Esophagus muscularis mucosa (tissue), 4 donors: ENCODE measurements at regions of chr4 and their contacts with region 1.

Region 1: DNA sequence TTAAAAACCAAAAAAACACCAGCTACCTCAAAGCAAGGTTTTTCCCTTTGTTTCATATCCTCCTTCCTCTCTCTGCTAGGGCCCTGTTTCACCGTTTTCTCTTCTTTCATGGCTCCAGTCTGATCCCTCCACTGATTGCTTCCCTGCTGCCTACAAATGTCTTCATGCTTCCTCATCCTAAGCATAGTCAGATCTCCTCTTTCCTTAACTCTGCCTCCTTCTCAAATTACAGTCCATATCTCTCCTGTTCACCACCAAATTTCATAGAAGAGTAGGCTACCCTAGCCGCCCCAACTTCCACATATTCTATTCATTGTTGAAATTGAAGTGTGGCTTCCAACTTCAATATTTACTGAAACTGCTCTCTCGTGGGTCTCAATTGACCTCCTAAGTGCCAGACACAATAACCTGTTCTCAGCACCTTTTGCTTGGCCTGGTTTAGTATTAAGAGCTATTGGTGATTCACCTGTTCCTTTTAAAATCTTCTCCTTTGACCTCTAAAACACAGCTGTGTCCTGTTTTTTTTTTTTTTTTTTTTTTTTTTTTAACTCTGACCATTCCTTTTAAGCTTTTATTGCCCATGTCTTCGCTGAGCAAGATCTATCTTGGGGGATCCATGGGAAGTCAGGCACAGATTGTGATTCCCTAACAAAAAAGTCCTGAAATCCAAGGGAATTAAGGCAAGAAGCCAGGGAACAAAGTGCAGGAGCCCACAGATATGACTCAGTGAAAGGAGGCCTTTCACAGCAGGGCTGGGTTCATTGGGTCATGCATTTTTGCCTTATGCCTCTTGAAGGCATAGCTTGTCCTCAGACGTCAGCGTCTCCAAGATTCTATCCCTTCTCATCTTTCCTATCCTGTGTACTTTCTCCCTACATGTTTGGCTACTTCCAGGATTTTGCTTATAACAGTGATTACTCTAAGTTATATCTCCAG is 85.4 kb downstream of the RPS3A start:
- DNase-seq: no peak
- H3K4me3 ChIP-seq: no peak overlapping the region
- H3K27ac ChIP-seq: no peak overlapping the region
- H3K4me1 ChIP-seq: peaks cover 0 to 7% (median 0%) of the 10 kb centered on the region in 4 donors
- H3K27me3 ChIP-seq: no peaks in the 10 kb centered on the region
- CTCF ChIP-seq: no peak
- EP300 ChIP-seq: no peak
- POLR2A ChIP-seq: no peak

Region 2: GRCh38 chr4:151004222-151004621 is 180.6 kb before region 1 on chr4:
- intact Hi-C with region 1: no loop called
- DNase-seq: no peak
- H3K4me3 ChIP-seq: no peak overlapping the region
- H3K27ac ChIP-seq: no peak overlapping the region
- H3K4me1 ChIP-seq: no peaks in the 10 kb centered on the region
- H3K27me3 ChIP-seq: no peaks in the 10 kb centered on the region
- CTCF ChIP-seq: no peak
- EP300 ChIP-seq: no peak
- POLR2A ChIP-seq: no peak

Region 3: GRCh38 chr4:151158979-151159378 is 25.8 kb before region 1 on chr4:
- intact Hi-C with region 1: loop called (anchors 2 kb)
- DNase-seq: no peak
- H3K4me3 ChIP-seq: no peak overlapping the region
- H3K27ac ChIP-seq: no peak overlapping the region
- H3K4me1 ChIP-seq: peaks cover 0 to 7% (median 6%) of the 10 kb centered on the region in 4 donors
- H3K27me3 ChIP-seq: no peaks in the 10 kb centered on the region
- CTCF ChIP-seq: no peak
- EP300 ChIP-seq: no peak
- POLR2A ChIP-seq: no peak

Region 4: DNA sequence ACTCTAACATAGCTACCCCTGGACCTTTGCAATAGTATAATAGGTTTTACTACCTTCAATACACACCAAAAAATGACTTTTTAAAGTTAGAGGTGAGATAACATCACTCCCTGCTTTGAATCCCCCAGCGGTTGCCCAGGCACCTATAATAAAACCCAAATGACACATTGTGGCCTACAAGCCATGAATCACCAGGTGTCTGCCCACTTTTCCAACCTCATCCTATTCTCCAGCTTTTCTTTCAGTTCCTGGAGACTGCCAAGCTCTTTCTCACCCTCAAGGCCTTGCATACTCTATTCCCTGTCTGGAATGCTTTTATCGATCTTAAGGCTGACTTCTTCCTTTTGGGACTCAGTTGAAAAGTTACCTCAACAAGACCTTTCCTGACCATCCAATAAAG is 75.7 kb after region 1 on chr4:
- intact Hi-C with region 1: no loop called
- DNase-seq: no peak
- H3K4me3 ChIP-seq: no peak overlapping the region
- H3K27ac ChIP-seq: no peak overlapping the region
- H3K4me1 ChIP-seq: peaks cover 17 to 52% (median 39%) of the 10 kb centered on the region in 4 donors
- H3K27me3 ChIP-seq: no peaks in the 10 kb centered on the region
- CTCF ChIP-seq: no peak
- EP300 ChIP-seq: no peak
- POLR2A ChIP-seq: no peak